ENCODE measurements at regions of chr4 and their contacts with region 1.

Region 1: GRCh38 chr4:6942238-6942800 is 32.7 kb downstream of the TBC1D14 start:
- DNase-seq: peak; percentile 61
- H3K4me3 Mint-ChIP-seq: peak overlapping the region; percentile 19
- H3K27ac Mint-ChIP-seq: peak overlapping the region; percentile 87
- H3K4me1 Mint-ChIP-seq: peaks cover 56% of the 10 kb centered on the region
- H3K27me3 Mint-ChIP-seq: no peaks in the 10 kb centered on the region

Region 2: DNA sequence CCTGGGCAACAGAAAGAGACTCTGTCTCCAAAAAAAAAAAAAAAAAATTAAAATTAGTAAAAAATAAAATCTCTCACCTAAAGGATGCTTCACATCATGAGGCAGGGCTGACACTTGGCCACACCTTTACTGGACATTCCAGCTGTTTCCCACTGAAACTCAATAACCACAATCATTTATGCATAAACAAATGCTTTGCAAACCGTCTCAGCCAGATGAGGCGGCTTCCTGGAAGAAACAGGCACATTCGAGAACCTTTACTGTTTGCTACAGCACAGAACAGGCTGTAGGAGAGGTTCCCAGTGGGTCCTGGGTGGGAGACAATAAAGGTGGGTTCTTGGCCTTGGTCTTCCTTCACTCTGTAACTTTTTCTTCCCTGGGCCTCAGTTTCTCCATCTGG is 43.6 kb before region 1 on chr4:
- CTCF ChIA-PET with region 1: interaction called, 3 read pairs
- POLR2A ChIA-PET with region 1: interaction called, 13 read pairs
- DNase-seq: peak; percentile 39
- H3K4me3 Mint-ChIP-seq: peak overlapping the region; percentile 40
- H3K27ac Mint-ChIP-seq: peak overlapping the region; percentile 94
- H3K4me1 Mint-ChIP-seq: peaks cover 63% of the 10 kb centered on the region
- H3K27me3 Mint-ChIP-seq: no peaks in the 10 kb centered on the region

Region 3: DNA sequence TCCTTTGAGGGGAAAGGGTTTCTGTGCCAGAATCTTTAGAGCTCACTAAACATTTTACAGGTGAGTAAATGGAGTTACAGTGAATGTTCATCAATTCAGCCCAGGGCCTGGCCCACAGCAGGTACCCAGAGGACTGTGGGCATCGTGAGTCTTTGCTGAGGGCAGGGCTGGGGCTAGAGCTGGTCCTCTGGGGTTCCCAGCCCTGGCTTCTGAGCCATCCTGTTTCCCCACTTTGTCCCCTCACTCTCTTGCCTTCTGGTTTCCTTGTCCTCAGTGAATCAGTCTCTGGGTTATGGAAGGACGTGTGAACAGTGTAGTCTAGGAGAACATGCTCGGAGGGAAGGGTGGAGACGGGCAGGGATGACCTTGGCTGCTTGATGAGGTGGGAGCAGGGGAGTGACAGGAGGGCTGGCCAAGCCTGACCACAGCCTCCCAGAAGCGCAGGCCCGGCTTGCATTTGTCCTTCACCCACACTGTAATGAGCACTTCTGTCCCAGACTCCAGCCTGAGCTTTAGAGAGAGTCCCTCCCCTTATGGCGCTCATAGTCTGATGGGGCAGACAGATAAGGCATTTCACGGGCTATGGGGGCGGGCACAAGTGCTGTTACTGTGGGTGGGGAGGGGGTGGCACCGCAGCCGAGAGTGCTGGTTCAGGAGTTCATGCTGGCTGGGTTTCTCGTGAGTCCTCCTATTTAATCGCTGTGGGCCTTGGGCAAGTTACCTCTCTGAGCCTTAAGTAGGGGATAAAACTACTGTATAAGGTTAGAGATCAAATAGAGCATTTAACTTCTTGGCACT is 15.4 kb before region 1 on chr4:
- CTCF ChIA-PET with region 1: interaction called, 9 read pairs
- POLR2A ChIA-PET with region 1: interaction called, 25 read pairs
- DNase-seq: peak; percentile 76
- H3K4me3 Mint-ChIP-seq: peak overlapping the region; percentile 53
- H3K27ac Mint-ChIP-seq: peak overlapping the region; percentile 70
- H3K4me1 Mint-ChIP-seq: peaks cover 62% of the 10 kb centered on the region
- H3K27me3 Mint-ChIP-seq: no peaks in the 10 kb centered on the region

Region 4: GRCh38 chr4:6974138-6974848 is 32.0 kb after region 1 on chr4:
- CTCF ChIA-PET with region 1: interaction called, 16 read pairs
- POLR2A ChIA-PET with region 1: no interaction called
- DNase-seq: peak; percentile 83
- H3K4me3 Mint-ChIP-seq: no peak overlapping the region
- H3K27ac Mint-ChIP-seq: no peak overlapping the region
- H3K4me1 Mint-ChIP-seq: peaks cover 19% of the 10 kb centered on the region
- H3K27me3 Mint-ChIP-seq: no peaks in the 10 kb centered on the region